ENCODE measurements at regions of chr5 and their contacts with region 1.

Region 1: DNA sequence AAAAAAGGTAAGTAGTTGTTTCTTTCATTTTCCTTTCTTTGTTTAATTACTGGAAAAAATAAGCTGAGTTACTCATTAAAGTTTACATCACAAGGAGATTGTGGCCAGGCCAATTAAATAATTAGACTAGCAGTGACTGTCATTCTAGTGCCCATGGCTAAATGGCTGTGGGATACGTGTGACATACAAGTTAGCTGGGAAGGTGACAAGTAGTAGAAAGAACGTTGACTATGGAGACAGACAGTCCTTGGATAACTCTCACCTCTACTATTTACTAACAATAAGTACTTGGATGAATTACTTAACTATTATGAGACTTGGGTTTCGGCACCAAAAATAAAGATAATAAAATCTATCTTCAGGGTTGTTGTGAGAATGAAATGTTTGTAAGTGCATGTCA is 7.0 kb upstream of the LOX start:
- DNase-seq: no peak

Region 2: GRCh38 chr5:121987685-121988073 is 97.4 kb before region 1 on chr5:
- intact Hi-C with region 1: no loop called
- DNase-seq: no peak

Region 3: DNA sequence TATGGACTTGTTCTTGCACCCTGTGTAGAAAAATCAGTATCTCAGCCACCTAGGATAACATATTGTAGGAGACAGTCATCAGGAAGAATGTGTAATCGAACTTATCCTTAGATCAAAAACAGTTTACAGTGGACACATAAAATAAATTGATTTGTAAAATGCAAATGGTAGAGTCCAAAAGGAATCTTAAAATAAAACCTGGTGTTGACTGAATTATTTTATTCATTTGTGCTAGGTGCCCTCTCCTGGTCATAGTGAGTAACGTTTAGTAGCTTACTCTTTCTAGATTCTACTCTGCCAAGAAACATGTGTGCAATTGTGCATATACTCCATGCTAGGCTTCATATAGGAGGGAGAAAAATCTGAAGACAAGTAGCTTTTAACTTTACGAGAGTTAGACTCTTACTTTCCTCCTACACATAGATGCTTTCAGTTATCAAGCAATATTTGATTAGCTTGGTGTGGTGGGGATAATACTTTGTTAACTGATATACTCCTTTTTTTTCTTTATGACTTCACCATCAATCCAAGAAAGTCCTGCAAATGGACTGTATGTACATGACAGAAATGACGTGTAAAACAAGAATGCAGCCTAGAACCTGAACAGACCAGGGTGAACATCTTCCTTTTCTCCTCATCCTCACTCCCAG is 16.7 kb after region 1 on chr5:
- intact Hi-C with region 1: loop called in 1 of 2 experiments (anchors 1 kb)
- DNase-seq: no peak

Region 4: DNA sequence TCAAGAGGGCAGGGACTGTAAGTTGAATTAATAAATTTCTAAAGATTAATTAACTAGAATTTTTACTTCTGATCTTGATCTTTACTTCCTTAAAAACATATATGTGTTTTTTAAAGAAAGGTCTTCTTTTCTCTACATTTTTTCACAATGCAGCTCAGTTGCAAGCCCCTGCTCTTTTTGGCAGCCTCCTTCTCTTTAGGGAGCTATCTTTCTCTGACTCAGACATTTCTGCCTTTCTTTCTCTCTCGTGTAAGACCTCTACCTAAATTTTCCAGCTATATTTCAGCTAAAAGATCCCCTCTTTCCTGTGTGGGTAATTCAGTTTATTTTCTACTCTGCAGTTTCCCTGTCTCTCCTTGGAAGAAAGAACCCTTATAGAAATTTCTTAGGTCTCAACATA is 188.7 kb after region 1 on chr5:
- intact Hi-C with region 1: no loop called
- DNase-seq: no peak